Right ventricle myocardium inferior (tissue), 1 donor: ENCODE measurements at regions of chr17 and their contacts with region 1.

Region 1: DNA sequence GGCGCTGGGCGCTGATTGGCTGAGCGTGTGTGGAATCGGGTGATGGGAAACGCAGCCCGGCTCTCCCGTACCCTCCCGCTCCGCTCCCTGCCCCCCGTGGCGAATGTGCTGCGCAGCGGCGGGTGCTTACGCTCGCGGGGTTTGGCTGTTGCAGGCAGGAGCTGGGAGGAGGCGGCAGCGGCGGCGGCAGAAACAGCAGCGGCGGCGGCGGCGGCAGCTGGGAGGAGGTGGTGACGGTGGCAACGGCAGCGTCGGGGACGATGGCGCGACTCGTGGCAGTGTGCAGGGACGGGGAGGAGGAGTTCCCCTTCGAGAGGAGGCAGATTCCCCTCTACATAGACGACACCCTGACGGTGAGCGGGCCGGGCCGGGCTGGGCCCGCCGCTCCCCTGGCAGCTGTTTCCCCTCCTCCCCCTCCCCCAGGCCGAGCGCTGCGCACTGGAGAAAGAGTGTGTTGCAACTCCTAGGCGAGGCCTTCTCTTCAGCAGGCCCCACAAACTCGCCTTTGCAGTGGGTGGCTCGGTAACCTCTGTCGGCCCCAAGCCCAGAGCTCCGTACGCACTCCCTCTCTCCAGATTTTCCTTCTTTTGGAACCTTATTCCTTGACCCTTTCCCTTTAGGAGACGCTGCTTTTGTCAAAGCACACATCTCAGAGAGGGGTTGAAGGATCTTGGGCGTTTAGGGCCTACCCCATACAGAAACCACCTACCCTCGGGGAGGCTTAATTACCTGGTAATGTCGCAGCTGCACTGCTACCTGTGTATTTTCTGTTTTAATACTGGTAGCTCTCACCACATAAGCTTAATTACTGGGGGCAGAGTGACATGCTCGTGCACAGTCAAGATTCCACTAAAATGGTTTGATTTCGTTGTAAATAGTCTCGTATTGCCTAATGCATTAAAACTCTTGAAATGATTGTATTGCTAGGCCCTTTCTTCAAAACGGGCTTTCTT is 1.0 kb downstream of the GGNBP2 start:
- DNase-seq: peak; percentile 97
- ATAC-seq: peak; percentile 94

Region 2: DNA sequence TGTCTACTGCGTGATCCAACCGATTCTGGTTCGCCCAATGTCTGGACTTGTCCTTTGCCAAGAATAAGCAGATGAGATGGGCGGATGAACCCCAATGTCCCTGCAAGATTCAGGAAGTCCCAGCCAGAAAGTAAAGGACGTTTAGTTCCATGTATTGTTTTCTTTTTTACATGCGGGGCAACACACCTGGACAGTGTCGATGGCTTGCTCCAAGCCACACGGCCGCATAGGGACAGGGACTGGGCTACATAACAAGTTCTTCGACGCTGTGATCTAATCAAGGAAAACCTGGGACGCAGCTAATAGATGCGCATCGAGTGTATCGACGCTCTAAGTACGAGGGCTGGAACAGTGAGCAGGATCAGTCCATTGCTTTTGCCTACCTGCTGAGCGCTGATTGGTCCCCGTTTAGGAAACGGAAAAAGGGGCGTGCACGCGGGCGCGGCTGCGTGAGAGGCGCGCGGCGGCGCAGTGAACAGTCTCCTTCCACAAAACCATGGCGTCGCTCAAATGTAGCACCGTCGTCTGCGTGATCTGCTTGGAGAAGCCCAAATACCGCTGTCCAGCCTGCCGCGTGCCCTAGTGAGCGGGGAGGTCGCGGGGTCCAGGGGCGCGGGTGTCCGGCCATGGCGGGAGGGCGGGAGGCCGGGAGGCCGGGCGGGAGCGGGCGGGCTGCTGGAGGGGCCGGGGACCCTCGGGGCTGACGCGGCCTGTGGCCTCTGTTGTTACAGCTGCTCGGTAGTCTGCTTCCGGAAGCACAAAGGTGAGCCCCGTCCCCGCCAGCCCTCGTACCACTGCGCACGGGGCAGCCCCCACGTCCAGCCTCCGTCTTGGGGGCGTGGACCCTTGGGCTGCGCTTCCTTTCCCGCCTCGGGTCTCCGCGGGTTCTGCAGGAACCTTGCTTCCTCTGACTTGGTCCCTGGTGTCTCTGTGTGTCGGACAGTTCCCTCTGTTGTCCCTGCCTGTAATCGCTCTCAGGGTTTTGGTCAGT is 59.2 kb before region 1 on chr17 and contains the start of gene ZNHIT3:
- intact Hi-C with region 1: loop called (anchors 2 kb)
- DNase-seq: peak; percentile 96
- ATAC-seq: peak; percentile 93
- total RNA-seq, gene ZNHIT3: 21.3 TPM

Region 3: GRCh38 chr17:36591434-36592315 is 45.9 kb after region 1 on chr17 and contains the start of gene DHRS11:
- intact Hi-C with region 1: loop called (anchors 5 kb)
- DNase-seq: peak; percentile 92
- ATAC-seq: peak; percentile 96
- total RNA-seq, gene DHRS11: 15.7 TPM

Region 4: DNA sequence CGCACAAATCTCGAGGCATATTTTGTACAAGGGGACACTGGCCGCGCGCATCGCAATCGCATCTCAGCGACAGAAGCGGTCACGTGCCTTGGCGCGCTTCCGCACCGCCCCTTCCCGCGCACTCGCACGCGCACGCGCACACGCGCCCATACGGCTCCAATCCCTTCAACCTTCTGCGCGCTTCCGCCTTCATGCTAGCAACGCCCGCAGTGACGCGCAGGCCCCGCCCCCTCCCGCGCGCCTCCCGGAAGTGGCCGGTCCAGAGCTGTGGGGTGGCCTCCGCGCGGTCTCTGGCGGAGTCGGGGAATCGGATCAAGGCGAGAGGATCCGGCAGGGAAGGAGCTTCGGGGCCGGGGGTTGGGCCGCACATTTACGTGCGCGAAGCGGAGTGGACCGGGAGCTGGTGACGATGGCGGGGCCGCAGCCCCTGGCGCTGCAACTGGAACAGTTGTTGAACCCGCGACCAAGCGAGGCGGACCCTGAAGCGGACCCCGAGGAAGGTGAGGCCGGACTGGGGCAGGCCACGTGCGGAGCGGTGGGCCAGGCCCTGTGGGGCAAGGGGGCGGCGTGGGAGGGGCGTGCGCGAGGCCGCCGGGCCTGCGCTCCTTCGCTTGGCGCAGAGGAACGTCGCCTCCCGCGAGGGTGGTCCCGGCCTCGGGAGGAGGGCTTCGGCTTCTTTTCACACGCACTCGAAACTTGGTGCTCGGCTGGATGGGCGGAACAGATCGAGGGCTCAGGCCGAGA is 403.1 kb after region 1 on chr17 and contains the start of gene AATF:
- intact Hi-C with region 1: no loop called
- DNase-seq: peak; percentile 98
- ATAC-seq: peak; percentile 100
- total RNA-seq, gene AATF: 23.9 TPM